IMR-90 (cell line): ENCODE measurements at regions of chr14 and their contacts with region 1.

Region 1: DNA sequence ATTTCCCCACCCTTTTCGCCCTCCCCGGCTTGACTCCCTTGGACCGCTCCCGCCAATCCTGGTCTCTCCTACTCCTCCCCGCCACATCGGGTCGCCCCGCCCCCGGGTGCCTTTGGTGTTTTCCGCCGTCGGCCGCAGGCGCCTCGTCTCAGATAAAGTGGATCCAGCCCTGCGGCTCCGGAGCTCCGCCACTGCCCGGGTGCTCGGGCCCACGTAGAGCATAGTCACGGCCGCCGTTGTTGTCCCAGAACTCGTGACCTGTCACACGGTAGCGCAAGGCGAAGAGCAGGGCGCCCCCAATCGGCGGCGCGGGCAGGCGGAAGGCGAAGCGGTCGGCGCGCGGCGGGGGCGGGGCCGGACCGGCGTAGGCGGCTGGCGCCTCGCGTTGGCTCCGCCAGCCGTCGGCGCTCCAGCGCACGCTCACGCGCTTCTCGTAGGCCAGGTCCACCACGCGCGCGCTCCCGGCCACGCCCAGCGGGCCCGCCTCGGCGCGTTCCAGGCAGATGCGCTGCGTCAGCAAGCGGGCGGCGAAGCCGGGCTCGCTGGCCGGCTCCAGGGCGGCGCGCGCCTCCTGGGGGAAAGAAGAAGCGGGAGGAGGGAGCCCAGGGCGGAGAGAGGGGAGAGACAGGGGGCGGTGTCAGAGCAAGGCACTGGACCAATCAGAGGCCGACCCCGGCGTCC is 1.2 kb downstream of the PPP1R3E start:
- DNase-seq: peak; percentile 98
- ATAC-seq: peak; percentile 84
- H3K4me3 ChIP-seq: peak overlapping the region; percentile 74
- H3K27ac ChIP-seq: peak overlapping the region; percentile 84
- H3K4me1 ChIP-seq: peaks cover 3% of the 10 kb centered on the region
- H3K27me3 ChIP-seq: no peaks in the 10 kb centered on the region
- CTCF ChIP-seq: peak; percentile 88
- POLR2A ChIP-seq: peak; percentile 19
- RAD21 ChIP-seq: no peak; the same call in none of the 2 replicates

Region 2: GRCh38 chr14:22536853-22537338 is 764.5 kb before region 1 on chr14:
- CTCF ChIA-PET with region 1: no interaction called
- POLR2A ChIA-PET with region 1: no interaction called
- dilution Hi-C with region 1: no loop called
- in situ Hi-C with region 1: loop called (anchors 25 kb)
- intact Hi-C with region 1: no loop called
- DNase-seq: peak; percentile 98
- ATAC-seq: peak; percentile 96
- H3K4me3 ChIP-seq: no peak overlapping the region
- H3K27ac ChIP-seq: peak overlapping the region; percentile 93
- H3K4me1 ChIP-seq: peaks cover 12% of the 10 kb centered on the region
- H3K27me3 ChIP-seq: no peaks in the 10 kb centered on the region
- CTCF ChIP-seq: no peak
- POLR2A ChIP-seq: no peak
- RAD21 ChIP-seq: no peak

Region 3: DNA sequence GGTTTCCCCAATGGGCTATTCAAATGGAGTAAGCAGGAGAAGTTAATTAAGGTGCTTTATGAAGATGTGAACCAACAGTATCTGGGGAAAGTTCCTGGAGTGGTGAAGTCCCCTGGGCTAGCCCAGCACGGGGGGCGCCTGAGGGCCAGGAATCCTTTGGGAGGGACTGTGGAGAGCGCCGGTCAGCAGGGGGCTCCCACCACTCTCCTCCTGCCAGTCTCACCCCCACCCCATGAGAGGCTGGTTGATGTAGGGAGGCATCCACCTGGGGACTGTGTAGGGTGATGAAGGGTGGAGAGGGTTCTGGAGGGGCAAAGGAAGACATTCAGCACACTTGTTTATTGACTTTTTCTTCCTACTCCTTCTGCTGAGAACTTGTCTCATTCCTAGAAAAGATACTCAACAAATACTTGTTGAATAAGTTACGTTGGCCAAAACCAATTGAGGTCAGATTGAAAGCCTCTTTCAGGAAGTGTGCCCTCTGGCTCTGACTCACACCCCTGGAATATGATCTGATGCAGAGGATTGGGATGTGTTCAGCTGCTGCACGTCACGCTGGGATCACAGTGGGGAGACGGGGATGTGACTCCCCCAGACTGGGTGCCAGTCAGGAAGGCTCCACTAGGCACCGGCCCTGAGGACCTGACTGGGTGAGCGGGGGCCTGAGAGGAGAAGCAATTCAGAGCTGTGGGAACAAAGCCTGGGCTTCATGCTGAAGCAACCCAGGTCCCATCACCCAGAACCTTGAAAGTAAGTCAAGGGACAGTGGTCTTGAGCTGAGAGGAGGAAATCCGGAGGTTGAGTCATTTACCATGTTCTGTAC is 186.5 kb before region 1 on chr14:
- CTCF ChIA-PET with region 1: no interaction called
- POLR2A ChIA-PET with region 1: no interaction called
- dilution Hi-C with region 1: no loop called
- in situ Hi-C with region 1: loop called (anchors 10 kb)
- intact Hi-C with region 1: loop called (anchors 2 kb)
- DNase-seq: peak; percentile 99
- ATAC-seq: peak; percentile 88
- H3K4me3 ChIP-seq: no peak overlapping the region
- H3K27ac ChIP-seq: peak overlapping the region; percentile 79
- H3K4me1 ChIP-seq: peaks cover 29% of the 10 kb centered on the region
- H3K27me3 ChIP-seq: no peaks in the 10 kb centered on the region
- CTCF ChIP-seq: 0 out of 2 replicates have a peak, but pooled peaks have one; percentile 3
- POLR2A ChIP-seq: peak; percentile 75; the same call in 1 of the 2 replicates
- RAD21 ChIP-seq: no peak; the same call in 1 of the 2 replicates

Region 4: GRCh38 chr14:23120541-23121251 is 180.7 kb before region 1 on chr14:
- CTCF ChIA-PET with region 1: interaction called, 10 read pairs
- POLR2A ChIA-PET with region 1: no interaction called
- dilution Hi-C with region 1: no loop called
- in situ Hi-C with region 1: loop called (anchors 10 kb)
- intact Hi-C with region 1: loop called (anchors 2 kb)
- DNase-seq: peak; percentile 82
- ATAC-seq: peak; percentile 97
- H3K4me3 ChIP-seq: no peak overlapping the region
- H3K27ac ChIP-seq: no peak overlapping the region
- H3K4me1 ChIP-seq: peaks cover 5% of the 10 kb centered on the region; the same call in 1 of the 2 replicates
- H3K27me3 ChIP-seq: no peaks in the 10 kb centered on the region; the same call in 1 of the 2 replicates
- CTCF ChIP-seq: peak; percentile 100; the same call in 1 of the 2 replicates
- POLR2A ChIP-seq: peak; percentile 53; the same call in 1 of the 2 replicates
- RAD21 ChIP-seq: peak; percentile 100

Region 5: GRCh38 chr14:23259426-23259825 is 42.0 kb before region 1 on chr14:
- CTCF ChIA-PET with region 1: interaction called, 11 read pairs
- POLR2A ChIA-PET with region 1: no interaction called
- dilution Hi-C with region 1: no loop called
- in situ Hi-C with region 1: no loop called
- intact Hi-C with region 1: no loop called
- DNase-seq: no peak
- ATAC-seq: no peak
- H3K4me3 ChIP-seq: no peak overlapping the region
- H3K27ac ChIP-seq: no peak overlapping the region
- H3K4me1 ChIP-seq: no peaks in the 10 kb centered on the region
- H3K27me3 ChIP-seq: peaks cover 14% of the 10 kb centered on the region
- CTCF ChIP-seq: no peak
- POLR2A ChIP-seq: no peak
- RAD21 ChIP-seq: no peak

Region 6: DNA sequence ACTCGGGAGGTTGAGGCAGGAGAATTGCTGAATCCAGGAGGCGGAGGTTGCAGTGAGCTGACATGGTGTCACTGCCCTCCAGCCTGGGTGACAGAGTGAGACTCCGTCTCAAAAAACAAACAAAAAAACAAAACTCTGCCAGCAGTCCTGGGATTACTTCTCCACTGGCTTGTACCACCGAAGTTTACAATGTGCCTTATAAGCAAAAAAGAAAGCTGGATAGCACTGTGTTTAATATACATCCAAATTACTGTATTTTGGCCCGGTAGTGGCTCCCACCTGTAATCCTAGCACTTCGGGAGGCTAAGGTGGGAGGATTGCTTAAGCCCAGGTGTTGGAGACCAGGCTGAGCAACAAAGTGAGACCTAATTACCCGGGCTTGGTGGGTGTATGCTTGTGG is 32.2 kb before region 1 on chr14:
- CTCF ChIA-PET with region 1: interaction called, 4 read pairs
- POLR2A ChIA-PET with region 1: interaction called, 3 read pairs
- dilution Hi-C with region 1: no loop called
- in situ Hi-C with region 1: no loop called
- intact Hi-C with region 1: loop called (anchors 1 kb)
- DNase-seq: no peak
- ATAC-seq: no peak
- H3K4me3 ChIP-seq: no peak overlapping the region
- H3K27ac ChIP-seq: no peak overlapping the region
- H3K4me1 ChIP-seq: no peaks in the 10 kb centered on the region
- H3K27me3 ChIP-seq: no peaks in the 10 kb centered on the region
- CTCF ChIP-seq: no peak
- POLR2A ChIP-seq: no peak
- RAD21 ChIP-seq: no peak

Region 7: DNA sequence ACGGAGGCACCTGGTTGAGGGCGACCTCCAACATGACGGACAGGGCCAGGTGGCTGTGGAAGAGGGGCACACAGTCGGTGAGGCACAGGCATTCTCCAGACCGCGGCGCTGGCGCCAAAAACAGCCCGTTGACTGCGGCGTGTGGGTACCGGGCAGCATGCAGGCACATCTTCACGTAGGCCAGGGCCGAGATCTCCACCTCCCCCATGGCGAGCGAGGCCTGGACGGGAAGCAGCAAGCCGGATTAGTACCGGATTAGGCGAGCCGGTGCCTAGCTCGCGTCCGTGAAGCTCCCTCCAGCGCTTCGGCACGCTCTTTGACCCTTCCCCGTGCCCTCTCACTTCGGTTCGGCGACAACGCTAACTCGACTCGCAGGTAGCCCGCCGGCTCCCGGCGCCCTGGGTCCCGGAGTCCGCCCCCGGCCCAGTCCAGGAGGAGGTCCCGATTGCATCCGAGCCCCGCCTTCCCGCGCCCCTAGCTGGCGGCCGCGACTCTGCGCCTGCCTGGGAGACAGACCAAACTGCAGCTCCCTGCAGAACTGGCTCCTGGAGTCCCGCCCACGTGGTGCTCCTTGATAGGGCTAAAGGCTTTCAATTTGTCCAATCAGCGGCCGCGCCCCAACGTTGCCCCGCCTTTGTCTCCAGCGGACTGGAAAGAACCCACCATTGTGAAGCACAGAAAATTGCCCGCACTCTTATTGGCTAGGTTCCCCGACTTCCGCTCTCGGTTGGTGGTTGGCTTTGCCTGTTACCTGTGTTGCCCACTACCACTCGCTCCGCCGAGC is 839.9 kb after region 1 on chr14 and contains the start of gene EMC9:
- CTCF ChIA-PET with region 1: no interaction called
- POLR2A ChIA-PET with region 1: no interaction called
- dilution Hi-C with region 1: no loop called
- in situ Hi-C with region 1: loop called (anchors 25 kb)
- intact Hi-C with region 1: no loop called
- DNase-seq: peak; percentile 99
- ATAC-seq: peak; percentile 92
- H3K4me3 ChIP-seq: peak within 1 kb of the TSS; percentile 68
- H3K27ac ChIP-seq: peak within 1 kb of the TSS; percentile 80
- H3K4me1 ChIP-seq: peaks cover 15% of the 10 kb centered on the region
- H3K27me3 ChIP-seq: no peaks in the 10 kb centered on the region
- CTCF ChIP-seq: peak; percentile 32
- POLR2A ChIP-seq: peak; percentile 84
- RAD21 ChIP-seq: no peak
- total RNA-seq, gene EMC9: 15.0 and 15.1 TPM in 2 replicates